Mammary epithelial cell (primary cell): ENCODE measurements at regions of chr17 and their contacts with region 1.

Region 1: DNA sequence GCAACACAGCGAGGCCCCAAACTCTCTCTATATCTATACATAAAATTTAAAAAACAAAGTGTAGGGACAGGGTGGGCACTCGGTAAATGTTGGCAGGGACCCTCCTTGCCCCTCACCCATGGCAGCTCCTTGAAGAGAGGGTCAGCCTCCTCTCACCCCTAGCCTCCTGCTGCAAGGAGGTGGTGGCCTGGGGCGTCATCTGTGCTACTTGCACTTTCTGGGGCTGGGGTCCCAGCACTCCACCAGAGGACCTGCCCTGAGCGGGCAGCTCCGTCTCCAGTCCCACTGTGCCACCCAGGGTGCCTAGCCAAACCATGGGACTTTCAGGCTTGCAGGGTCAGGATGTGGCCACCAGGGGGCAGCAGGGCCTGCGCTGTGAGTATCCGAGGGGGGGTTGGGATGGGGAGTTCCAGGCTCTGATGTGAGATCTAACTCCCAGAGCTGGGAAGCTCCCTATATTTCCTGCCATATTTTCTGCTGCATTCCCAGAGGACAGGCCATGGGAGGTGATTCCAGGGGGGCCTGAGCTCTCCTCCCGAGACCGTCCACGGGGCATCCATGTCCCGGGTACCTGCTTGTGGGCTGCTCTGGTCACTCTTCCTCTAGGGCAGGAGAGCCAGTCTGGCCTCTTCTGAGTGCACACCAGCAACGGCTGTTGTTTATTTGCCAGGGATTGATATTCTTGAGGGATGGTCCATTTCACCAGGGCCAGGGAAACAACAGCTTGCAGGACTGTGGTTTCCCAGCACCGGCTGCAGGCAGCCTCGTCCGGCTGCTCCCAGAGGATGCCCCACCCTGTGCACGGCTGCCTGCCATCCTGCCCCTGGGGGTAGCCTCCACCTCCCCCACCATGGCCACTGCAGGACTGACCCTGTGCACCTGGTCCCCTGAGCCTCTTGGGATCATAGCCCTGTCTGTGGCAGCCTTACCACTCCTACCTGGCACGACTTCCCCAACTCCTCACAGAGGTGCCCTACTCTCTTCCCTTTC is 1.1 kb downstream of the GPR142 start:
- DNase-seq: peak; percentile 45
- H3K4me3 ChIP-seq: no peak overlapping the region
- H3K27ac ChIP-seq: no peak overlapping the region
- H3K4me1 ChIP-seq: no peaks in the 10 kb centered on the region
- H3K27me3 ChIP-seq: peaks cover 1% of the 10 kb centered on the region
- CTCF ChIP-seq: peak; percentile 85 to 96

Region 2: DNA sequence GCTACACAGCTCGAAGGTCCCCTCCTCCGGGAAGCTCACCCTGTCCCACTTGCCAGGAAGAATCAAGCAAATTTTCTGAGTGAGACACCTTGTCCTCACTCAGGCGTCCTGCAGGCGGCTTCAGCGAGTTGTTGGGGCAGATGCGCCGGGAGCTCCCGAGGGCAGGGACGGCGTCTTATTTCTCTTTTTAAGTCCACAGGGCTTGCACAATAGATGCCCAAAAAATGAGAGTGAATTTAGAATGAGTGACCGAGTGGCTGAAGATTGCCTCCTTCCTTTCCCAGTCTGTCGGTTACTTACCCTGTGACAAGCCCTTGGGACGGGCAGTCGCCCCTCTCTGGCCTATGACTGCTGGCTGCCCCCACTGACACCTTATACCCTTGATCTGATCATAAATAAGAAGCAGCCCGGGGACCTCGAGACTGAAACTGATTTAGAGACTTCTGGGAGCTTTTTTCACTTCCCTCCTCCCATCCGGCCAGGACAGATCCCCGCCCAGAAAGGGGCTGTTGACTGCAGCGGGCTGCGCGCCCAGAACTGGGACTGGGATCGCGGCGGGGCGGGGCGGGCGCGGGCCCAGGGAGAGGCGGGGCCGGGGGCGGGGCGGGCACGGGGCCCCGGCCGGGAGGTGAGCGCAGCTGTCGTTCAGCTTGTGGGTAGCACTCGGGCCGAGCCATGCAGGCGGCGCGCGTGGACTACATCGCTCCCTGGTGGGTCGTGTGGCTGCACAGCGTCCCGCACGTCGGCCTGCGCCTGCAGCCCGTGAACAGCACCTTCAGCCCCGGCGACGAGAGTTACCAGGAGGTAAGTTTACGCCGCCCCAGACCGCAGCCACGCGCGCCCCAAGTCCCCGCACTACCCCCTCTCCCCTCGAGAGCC is 155.2 kb before region 1 on chr17 and contains the start of gene TTYH2:
- CTCF ChIA-PET with region 1: no interaction called
- dilution Hi-C with region 1: no loop called
- in situ Hi-C with region 1: no loop called
- intact Hi-C with region 1: loop called (anchors 2 kb)
- DNase-seq: peak; percentile 73
- H3K4me3 ChIP-seq: peak within 1 kb of the TSS; percentile 55 to 66 (median 64)
- H3K27ac ChIP-seq: peak within 1 kb of the TSS; percentile 42
- H3K4me1 ChIP-seq: peaks cover 43% of the 10 kb centered on the region
- H3K27me3 ChIP-seq: no peaks in the 10 kb centered on the region
- CTCF ChIP-seq: peak; percentile 9 to 56
- total RNA-seq, gene TTYH2: 0.49 to 0.67 TPM

Region 3: GRCh38 chr17:74296548-74296936 is 71.8 kb before region 1 on chr17:
- CTCF ChIA-PET with region 1: no interaction called
- dilution Hi-C with region 1: no loop called
- in situ Hi-C with region 1: no loop called
- intact Hi-C with region 1: loop called (anchors 2 kb)
- DNase-seq: peak; percentile 29
- H3K4me3 ChIP-seq: no peak overlapping the region
- H3K27ac ChIP-seq: no peak overlapping the region
- H3K4me1 ChIP-seq: peaks cover 7% of the 10 kb centered on the region
- H3K27me3 ChIP-seq: no peaks in the 10 kb centered on the region
- CTCF ChIP-seq: peak; percentile 17 to 56

Region 4: DNA sequence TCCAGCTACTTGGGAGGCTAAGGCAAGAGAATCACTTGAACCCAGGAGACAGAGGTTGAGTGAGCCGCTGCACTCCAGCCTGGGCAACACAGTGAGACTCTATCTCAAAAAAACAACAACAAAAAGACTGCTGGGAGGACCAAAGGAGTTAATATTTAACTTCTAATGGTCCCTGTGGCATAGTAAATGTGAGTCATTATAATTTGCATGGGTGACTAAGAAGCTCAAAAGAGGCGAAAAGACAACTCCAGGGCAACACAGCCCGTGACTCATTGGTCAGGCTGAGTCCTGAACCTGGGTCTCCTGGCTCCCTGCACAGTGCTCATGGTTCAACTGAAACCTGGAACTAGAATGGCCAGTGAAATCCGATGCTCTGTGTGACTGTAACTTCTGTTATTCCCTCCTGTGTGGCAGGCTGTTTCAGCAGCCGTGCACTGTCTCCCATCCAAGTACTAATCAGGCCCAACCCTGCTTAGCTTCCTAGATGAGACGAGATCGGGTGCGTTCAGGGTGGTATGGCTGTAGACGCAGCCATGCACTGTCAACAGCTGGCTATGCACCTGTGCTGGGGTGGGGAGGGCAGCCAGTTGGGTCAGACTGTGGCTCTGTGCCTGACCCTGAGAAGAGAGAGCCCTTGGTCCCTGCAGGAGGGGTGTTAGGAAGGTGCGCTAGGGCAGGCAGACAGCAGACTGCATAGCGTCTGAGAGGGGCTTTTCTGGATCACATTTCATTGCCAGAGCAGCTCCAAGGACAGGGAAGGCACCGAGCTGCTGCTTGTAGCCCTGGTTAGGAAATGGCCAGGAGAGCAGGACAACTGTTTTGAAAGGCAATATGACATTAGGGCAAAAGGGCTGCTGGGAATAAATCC is 49.0 kb after region 1 on chr17:
- CTCF ChIA-PET with region 1: no interaction called
- dilution Hi-C with region 1: no loop called
- in situ Hi-C with region 1: no loop called
- intact Hi-C with region 1: no loop called
- DNase-seq: peak; percentile 81
- H3K4me3 ChIP-seq: no peak overlapping the region
- H3K27ac ChIP-seq: no peak overlapping the region
- H3K4me1 ChIP-seq: peaks cover 6% of the 10 kb centered on the region
- H3K27me3 ChIP-seq: no peaks in the 10 kb centered on the region
- CTCF ChIP-seq: no peak

Region 5: DNA sequence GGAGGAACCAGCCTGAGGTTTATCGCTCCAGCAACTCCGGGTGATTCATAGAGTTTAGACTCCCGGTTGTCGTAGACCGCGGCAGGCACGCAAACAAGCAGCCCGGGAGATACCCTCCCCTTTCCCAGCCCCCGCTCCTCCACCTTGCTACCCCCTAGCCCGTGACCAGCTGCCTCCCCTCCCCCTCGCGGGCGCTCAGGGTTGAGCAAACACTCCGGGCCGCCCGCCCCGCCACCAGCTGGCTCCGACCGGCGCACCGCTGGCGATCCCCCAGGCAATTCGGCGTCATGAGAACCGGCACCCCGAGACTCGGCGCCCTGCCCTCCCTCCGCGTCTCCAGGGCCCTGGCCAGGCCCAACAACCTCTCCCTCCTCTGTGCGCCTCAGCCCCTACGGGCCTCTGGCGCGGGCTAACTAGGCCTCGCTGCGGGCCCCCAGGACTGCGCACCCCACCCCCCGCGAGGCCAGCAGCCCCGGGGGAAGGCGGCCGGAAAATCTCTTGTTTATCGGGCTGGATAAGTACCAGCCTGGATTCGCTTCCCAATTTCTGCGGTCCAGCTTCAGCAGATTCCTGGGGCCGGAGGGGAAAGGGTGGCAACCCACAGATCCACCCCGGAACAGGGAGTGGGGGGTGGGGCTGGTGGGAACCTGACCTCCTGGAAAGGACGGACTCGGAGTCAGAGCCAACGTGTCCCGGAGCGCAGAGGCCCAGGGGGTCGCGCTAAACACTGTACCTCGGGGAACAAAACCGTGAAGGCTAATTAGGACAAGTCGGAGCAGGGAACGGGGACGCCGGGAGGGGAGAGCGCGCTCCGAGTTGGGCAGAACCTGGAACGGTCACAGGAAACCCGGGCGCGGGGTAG is 62.5 kb after region 1 on chr17:
- CTCF ChIA-PET with region 1: interaction called, 11 read pairs
- dilution Hi-C with region 1: no loop called
- in situ Hi-C with region 1: no loop called
- intact Hi-C with region 1: no loop called
- DNase-seq: peak; percentile 89
- H3K4me3 ChIP-seq: peak overlapping the region; percentile 30 to 68 (median 44)
- H3K27ac ChIP-seq: peak overlapping the region; percentile 54
- H3K4me1 ChIP-seq: peaks cover 37% of the 10 kb centered on the region
- H3K27me3 ChIP-seq: peaks cover 2% of the 10 kb centered on the region
- CTCF ChIP-seq: no peak

Region 6: GRCh38 chr17:74493381-74493833 is 125.0 kb after region 1 on chr17:
- CTCF ChIA-PET with region 1: no interaction called
- dilution Hi-C with region 1: no loop called
- in situ Hi-C with region 1: no loop called
- intact Hi-C with region 1: loop called (anchors 1 kb)
- DNase-seq: peak; percentile 37
- H3K4me3 ChIP-seq: no peak overlapping the region
- H3K27ac ChIP-seq: no peak overlapping the region
- H3K4me1 ChIP-seq: no peaks in the 10 kb centered on the region
- H3K27me3 ChIP-seq: no peaks in the 10 kb centered on the region
- CTCF ChIP-seq: peak; percentile 91 to 93